ENCODE measurements at regions of chr9 and their contacts with region 1.

Region 1: DNA sequence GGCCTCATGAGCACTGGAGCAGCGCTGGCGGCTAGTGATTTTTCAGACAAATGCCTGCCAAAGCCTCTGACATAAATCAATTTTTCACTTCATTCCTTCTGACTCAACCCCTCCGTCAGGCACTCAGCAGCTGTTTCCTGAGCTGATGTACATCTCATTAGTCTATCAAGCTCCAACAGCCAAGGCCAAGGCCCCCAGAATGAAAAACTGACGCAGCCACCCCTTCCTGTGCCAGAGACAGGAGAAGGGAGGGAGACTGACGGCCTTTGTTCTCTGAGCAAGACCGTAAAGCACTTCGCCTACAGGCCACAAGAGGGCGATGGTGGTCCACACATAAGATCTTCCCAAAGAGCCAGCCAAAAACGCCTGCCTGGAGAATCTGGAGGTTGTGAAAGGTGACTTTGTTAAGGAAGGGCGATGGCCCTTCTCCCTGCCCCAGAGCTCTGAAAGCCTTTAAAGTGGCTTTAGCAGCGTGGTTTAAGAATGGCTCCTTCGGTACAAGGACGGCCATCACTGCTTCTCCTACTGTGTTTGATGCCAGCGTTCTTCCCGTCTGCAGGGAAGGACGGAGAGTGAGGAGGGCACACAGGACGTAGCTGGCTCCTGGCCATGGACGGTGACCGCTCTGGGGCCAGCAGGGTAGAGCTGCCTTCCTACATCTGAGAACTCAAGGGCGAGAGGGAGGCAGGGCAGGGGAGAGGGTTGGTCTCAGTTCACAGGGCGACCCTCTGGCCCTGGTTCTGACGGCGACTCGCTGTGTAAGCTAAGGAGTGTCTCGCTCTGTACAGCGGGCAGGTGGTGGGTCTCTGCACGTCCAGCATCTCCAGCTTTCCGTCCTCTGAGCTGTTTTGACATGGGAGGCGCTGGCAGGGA is 37.0 kb downstream of the ALG2 start:
- DNase-seq: peak; percentile 99
- H3K4me3 ChIP-seq: peak overlapping the region in 2 of 3 experiments; percentile 20 to 25
- H3K27ac ChIP-seq: peak overlapping the region; percentile 88
- H3K4me1 ChIP-seq: peaks cover 10% of the 10 kb centered on the region
- H3K27me3 ChIP-seq: peaks cover 3 to 5% of the 10 kb centered on the region in 2 experiments
- CTCF ChIP-seq: peak; percentile 94 to 97
- POLR2A ChIP-seq: peak; percentile 50

Region 2: GRCh38 chr9:99162759-99163364 is 21.8 kb before region 1 on chr9:
- CTCF ChIA-PET with region 1: interaction called, 19 read pairs
- POLR2A ChIA-PET with region 1: no interaction called
- dilution Hi-C with region 1: no loop called
- intact Hi-C with region 1: loop called (anchors 1 kb)
- DNase-seq: peak; percentile 62
- H3K4me3 ChIP-seq: no peak overlapping the region
- H3K27ac ChIP-seq: no peak overlapping the region
- H3K4me1 ChIP-seq: peaks cover 3% of the 10 kb centered on the region
- H3K27me3 ChIP-seq: peaks cover 2 to 7% of the 10 kb centered on the region in 2 experiments
- CTCF ChIP-seq: peak; percentile 43 to 44
- POLR2A ChIP-seq: no peak

Region 3: GRCh38 chr9:99239341-99240060 is 54.8 kb after region 1 on chr9:
- CTCF ChIA-PET with region 1: interaction called, 21 read pairs
- POLR2A ChIA-PET with region 1: no interaction called
- dilution Hi-C with region 1: no loop called
- intact Hi-C with region 1: loop called (anchors 1 kb)
- DNase-seq: no peak
- H3K4me3 ChIP-seq: no peak overlapping the region
- H3K27ac ChIP-seq: no peak overlapping the region
- H3K4me1 ChIP-seq: no peaks in the 10 kb centered on the region
- H3K27me3 ChIP-seq: no peaks in the 10 kb centered on the region
- CTCF ChIP-seq: no peak
- POLR2A ChIP-seq: no peak

Region 4: GRCh38 chr9:99340281-99340680 is 155.6 kb after region 1 on chr9:
- CTCF ChIA-PET with region 1: no interaction called
- POLR2A ChIA-PET with region 1: no interaction called
- dilution Hi-C with region 1: no loop called
- intact Hi-C with region 1: loop called (anchors 1 kb)
- DNase-seq: peak; percentile 83
- H3K4me3 ChIP-seq: no peak overlapping the region
- H3K27ac ChIP-seq: peak overlapping the region; percentile 93
- H3K4me1 ChIP-seq: peaks cover 27% of the 10 kb centered on the region
- H3K27me3 ChIP-seq: no peaks in the 10 kb centered on the region
- CTCF ChIP-seq: no peak
- POLR2A ChIP-seq: peak; percentile 40

Region 5: DNA sequence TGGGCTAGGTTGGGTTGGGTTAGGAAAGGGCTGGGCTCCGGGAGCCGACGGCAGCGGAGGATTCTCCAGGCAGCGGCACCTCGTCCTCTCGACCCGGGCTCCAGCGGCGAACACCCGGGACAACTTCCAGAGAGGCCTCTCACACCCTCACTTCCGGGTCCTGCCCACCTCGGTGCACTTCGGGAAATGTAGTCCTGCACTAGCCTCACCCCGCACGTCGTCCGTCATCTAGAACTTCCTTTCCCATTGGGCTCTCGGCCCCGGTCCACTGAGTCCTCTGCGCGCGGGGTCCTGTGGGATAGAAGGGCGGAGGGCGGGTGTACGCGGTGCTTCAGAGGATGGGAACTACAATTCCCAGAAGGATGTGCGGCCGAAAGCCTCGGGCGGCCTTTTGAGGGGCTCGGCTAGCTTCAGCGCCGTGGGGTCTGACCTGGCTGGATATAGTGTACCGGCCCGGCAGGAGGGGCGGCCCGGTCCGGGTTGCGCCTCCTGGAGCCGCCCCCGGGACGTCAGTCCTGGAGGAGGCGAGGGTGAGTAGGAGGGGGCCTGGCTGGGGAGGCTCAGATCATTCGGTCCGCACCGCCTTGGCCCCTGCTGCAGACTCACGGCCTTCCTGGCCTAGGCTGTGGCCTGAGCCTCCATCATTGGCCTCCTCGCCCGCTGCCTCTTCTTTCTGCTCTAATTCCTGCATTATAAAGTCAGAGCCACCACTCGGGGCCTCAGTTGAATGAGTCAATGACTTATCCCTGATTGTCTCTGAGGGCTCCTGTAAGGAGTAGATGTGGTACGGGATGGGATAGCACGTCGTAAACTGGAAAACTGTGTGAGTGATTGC is 914.4 kb after region 1 on chr9 and contains the starts of genes ERP44 and INVS:
- CTCF ChIA-PET with region 1: interaction called, 3 read pairs
- POLR2A ChIA-PET with region 1: no interaction called
- dilution Hi-C with region 1: no loop called
- intact Hi-C with region 1: loop called (anchors 2 kb)
- DNase-seq: peak; percentile 99
- H3K4me3 ChIP-seq: peak within 1 kb of the TSS; percentile 63 to 85 (median 76)
- H3K27ac ChIP-seq: peak within 1 kb of the TSS; percentile 74
- H3K4me1 ChIP-seq: peaks cover 20% of the 10 kb centered on the region
- H3K27me3 ChIP-seq: no peaks in the 10 kb centered on the region
- CTCF ChIP-seq: no peak
- POLR2A ChIP-seq: peak; percentile 93
- total RNA-seq, gene ERP44: 19.3 and 21.4 TPM in 2 replicates
- total RNA-seq, gene INVS: 17.9 and 20.3 TPM in 2 replicates

Measured in endothelial cell of umbilical vein (primary cell).